Activated CD4-positive, alpha-beta T cell treated with anti-CD3 and anti-CD28 coated beads for 36 hours (primary cell): ENCODE measurements at regions of chr2 and their contacts with region 1.

Region 1: GRCh38 chr2:143696651-143697050 is 567.4 kb downstream of the ARHGAP15 start:
- DNase-seq: no peak
- ATAC-seq: no peak
- H3K4me3 Mint-ChIP-seq: no peak overlapping the region
- H3K27ac Mint-ChIP-seq: no peak overlapping the region
- H3K4me1 Mint-ChIP-seq: peaks cover 56% of the 10 kb centered on the region
- H3K27me3 Mint-ChIP-seq: no peaks in the 10 kb centered on the region

Region 2: DNA sequence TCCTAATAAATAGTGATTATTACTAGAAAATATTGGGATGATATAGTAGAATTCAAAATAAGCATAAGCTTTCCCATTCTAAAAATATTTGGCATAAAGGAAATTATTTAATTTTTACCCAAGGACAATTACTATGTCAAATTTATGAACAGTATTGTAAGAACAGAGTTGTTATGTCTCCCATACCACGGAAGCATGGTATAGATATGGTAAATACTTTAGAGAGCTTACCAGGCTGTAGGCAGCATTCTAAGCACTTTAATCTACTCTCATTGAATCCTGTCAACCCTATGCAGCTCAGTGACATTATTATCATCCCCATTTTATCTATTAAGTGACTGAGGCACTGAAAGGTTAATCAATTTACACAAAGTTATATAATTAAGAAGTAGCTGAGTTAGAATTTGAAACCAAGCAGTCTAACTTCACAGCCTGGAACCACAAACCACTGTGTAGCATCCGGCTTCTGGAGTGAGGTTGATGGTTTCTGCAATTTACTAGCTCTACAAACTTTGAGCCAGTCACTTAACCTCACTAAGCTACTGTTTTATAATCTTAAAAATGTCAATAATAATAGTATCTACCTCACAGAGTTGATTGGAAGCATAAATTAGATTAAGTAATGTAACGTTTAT is 243.7 kb before region 1 on chr2:
- CTCF ChIA-PET with region 1: no interaction called
- POLR2A ChIA-PET with region 1: no interaction called
- intact Hi-C with region 1: no loop called
- DNase-seq: peak; percentile 58
- ATAC-seq: peak; percentile 77
- H3K4me3 Mint-ChIP-seq: no peak overlapping the region
- H3K27ac Mint-ChIP-seq: no peak overlapping the region
- H3K4me1 Mint-ChIP-seq: peaks cover 37% of the 10 kb centered on the region
- H3K27me3 Mint-ChIP-seq: no peaks in the 10 kb centered on the region

Region 3: DNA sequence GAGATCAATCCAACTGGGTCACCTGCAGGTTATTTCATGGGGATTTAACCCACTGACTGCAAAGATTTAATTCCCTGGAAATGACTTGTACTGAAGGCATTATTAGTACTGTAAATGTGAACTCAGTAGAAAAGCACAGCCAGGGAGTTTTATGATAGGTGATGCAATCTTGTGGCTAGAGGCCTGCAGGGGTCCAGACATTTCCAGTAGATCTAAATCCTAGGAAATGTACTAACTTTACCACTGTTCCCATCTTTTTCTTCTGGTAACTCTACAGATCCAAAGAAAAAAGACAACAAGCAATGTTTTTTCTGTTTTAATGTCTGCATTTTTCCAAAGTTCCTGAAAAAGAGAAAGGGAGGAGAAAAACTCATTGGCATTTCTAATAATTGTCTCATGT is 67.3 kb before region 1 on chr2:
- CTCF ChIA-PET with region 1: no interaction called
- POLR2A ChIA-PET with region 1: no interaction called
- intact Hi-C with region 1: no loop called
- DNase-seq: no peak
- ATAC-seq: no peak
- H3K4me3 Mint-ChIP-seq: no peak overlapping the region
- H3K27ac Mint-ChIP-seq: no peak overlapping the region
- H3K4me1 Mint-ChIP-seq: peaks cover 10% of the 10 kb centered on the region
- H3K27me3 Mint-ChIP-seq: no peaks in the 10 kb centered on the region

Region 4: GRCh38 chr2:143675021-143675420 is 21.6 kb before region 1 on chr2:
- CTCF ChIA-PET with region 1: interaction called, 3 read pairs
- POLR2A ChIA-PET with region 1: no interaction called
- intact Hi-C with region 1: loop called in 1 of 2 experiments (anchors 1 kb)
- DNase-seq: no peak
- ATAC-seq: peak; percentile 53
- H3K4me3 Mint-ChIP-seq: no peak overlapping the region
- H3K27ac Mint-ChIP-seq: no peak overlapping the region
- H3K4me1 Mint-ChIP-seq: peaks cover 21% of the 10 kb centered on the region
- H3K27me3 Mint-ChIP-seq: no peaks in the 10 kb centered on the region

Region 5: GRCh38 chr2:143802871-143803650 is 106.4 kb after region 1 on chr2:
- CTCF ChIA-PET with region 1: interaction called, 3 read pairs
- POLR2A ChIA-PET with region 1: no interaction called
- intact Hi-C with region 1: loop called in 1 of 2 experiments (anchors 2 kb)
- DNase-seq: no peak
- ATAC-seq: peak; percentile 71
- H3K4me3 Mint-ChIP-seq: no peak overlapping the region
- H3K27ac Mint-ChIP-seq: peak overlapping the region; percentile 57
- H3K4me1 Mint-ChIP-seq: peaks cover 9% of the 10 kb centered on the region
- H3K27me3 Mint-ChIP-seq: peaks cover 2% of the 10 kb centered on the region

Region 6: DNA sequence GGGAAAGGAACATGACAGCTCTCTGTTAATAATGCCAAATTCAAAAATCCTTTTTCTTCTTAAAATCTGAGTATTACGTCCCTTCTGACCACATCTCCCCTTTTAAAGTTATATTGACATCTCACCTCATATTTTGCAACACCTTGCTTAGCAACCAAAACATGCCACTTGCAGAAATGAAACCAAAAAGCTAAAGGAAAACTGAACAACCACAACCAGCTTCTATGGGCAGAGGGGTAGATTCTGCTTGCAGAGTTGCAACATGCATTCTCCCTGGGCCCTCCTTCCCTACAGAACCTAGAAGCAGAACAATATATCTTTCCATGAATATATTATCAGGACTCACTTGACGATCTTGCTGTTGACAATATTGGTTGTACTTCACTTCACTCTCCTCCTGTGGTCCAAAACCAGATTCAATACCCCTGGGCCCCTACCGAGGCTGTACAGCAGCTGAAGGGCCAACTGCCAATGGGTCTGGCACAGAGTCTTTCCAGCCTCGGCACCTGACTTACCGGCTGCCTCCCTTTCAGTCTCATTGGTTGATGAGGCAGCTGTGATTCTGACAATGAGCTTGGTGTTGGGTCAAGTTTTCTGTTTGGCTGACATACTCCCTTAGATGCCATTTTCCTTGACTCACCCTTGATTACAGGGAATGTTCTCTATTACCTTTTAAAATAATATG is 206.7 kb after region 1 on chr2:
- CTCF ChIA-PET with region 1: no interaction called
- POLR2A ChIA-PET with region 1: no interaction called
- intact Hi-C with region 1: no loop called
- DNase-seq: no peak
- ATAC-seq: no peak
- H3K4me3 Mint-ChIP-seq: no peak overlapping the region
- H3K27ac Mint-ChIP-seq: no peak overlapping the region
- H3K4me1 Mint-ChIP-seq: peaks cover 12% of the 10 kb centered on the region
- H3K27me3 Mint-ChIP-seq: peaks cover 7% of the 10 kb centered on the region

Region 7: GRCh38 chr2:144332356-144333142 is 635.9 kb after region 1 on chr2:
- CTCF ChIA-PET with region 1: no interaction called
- POLR2A ChIA-PET with region 1: no interaction called
- intact Hi-C with region 1: loop called in 1 of 2 experiments (anchors 10 kb)
- DNase-seq: peak; percentile 94
- ATAC-seq: peak; percentile 88
- H3K4me3 Mint-ChIP-seq: peak overlapping the region; percentile 93
- H3K27ac Mint-ChIP-seq: peak overlapping the region; percentile 88
- H3K4me1 Mint-ChIP-seq: peaks cover 32% of the 10 kb centered on the region
- H3K27me3 Mint-ChIP-seq: peaks cover 2% of the 10 kb centered on the region